ENCODE measurements at regions of chr5 and their contacts with region 1.

Region 1: GRCh38 chr5:163564321-163564938 is 59.0 kb downstream of the MAT2B start:
- DNase-seq: peak; percentile 48
- ATAC-seq: peak; percentile 59; the same call in 1 of the 2 replicates
- H3K4me3 ChIP-seq: no peak overlapping the region
- H3K27ac ChIP-seq: no peak overlapping the region
- H3K4me1 ChIP-seq: no peaks in the 10 kb centered on the region
- H3K27me3 ChIP-seq: peaks cover 40% of the 10 kb centered on the region; the same call in 1 of the 2 replicates
- CTCF ChIP-seq: peak; percentile 48 to 83 (median 77); a peak in 5 of 6 replicates
- POLR2A ChIP-seq: no peak
- RAD21 ChIP-seq: peak; percentile 83

Region 2: DNA sequence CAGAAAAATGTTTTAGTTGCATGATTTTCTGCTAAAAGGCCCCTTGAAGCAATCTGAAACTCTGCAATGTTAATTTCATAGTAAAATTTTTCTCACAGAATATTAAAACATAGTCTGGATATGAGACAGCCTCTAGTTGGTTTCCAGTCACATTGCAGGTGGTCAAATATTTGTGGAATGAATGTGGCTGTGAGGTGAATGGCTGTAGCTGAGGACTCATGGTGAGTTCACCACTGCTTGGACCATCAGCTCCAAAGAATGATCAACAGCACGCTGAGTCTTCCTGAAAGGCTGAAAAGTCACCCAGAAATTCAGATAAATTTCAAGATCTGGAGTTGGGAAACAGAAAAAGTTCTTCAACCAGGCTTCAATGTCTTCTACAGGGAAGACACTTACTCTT is 20.8 kb after region 1 on chr5:
- CTCF ChIA-PET with region 1: no interaction called
- POLR2A ChIA-PET with region 1: no interaction called
- RAD21 ChIA-PET with region 1: no interaction called
- intact Hi-C with region 1: no loop called
- DNase-seq: no peak
- ATAC-seq: no peak
- H3K4me3 ChIP-seq: no peak overlapping the region
- H3K27ac ChIP-seq: no peak overlapping the region
- H3K4me1 ChIP-seq: no peaks in the 10 kb centered on the region
- H3K27me3 ChIP-seq: peaks cover 10% of the 10 kb centered on the region; the same call in 1 of the 2 replicates
- CTCF ChIP-seq: no peak
- POLR2A ChIP-seq: no peak
- RAD21 ChIP-seq: no peak

Region 3: DNA sequence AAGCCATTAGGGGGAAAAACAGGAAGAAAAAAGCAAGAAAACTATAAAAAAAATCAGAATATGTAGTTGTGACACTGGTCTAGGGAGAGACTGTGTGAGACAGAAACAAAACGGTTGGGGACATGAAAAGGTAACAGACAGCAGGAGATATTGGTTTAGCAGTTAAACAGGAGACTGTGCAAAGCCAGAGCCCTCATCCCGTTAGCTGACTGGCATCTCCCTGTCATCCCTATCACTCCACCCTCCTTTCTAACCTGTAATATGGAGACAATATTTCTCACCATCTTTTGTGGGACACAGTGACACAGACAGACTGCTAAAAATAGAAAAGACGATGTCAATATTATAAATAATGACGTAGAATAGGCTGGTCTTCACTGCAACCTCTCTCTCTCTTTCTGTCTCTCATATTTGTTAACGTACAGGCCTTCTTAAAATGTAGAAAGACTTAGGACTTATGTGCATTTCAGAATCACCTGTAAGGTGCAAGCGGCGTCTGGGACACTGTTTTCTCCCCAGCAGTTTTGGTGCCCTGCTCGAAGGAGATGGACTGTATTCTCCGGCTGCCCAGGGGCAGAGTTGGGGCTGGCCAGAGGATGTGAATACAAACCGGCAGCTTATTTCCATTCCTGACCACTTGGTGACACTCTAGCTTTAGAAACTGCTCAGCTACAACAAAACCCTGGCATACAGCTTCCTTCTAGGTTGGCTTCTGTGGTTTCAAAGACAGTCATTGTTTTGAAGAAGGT is 131.6 kb after region 1 on chr5:
- CTCF ChIA-PET with region 1: no interaction called
- POLR2A ChIA-PET with region 1: no interaction called
- RAD21 ChIA-PET with region 1: no interaction called
- intact Hi-C with region 1: loop called (anchors 10 kb)
- DNase-seq: peak; percentile 19
- ATAC-seq: peak; percentile 93
- H3K4me3 ChIP-seq: no peak overlapping the region
- H3K27ac ChIP-seq: no peak overlapping the region
- H3K4me1 ChIP-seq: no peaks in the 10 kb centered on the region
- H3K27me3 ChIP-seq: peaks cover 7% of the 10 kb centered on the region; the same call in 1 of the 2 replicates
- CTCF ChIP-seq: peak; percentile 23 to 66 (median 47); a peak in 5 of 6 replicates
- POLR2A ChIP-seq: no peak
- RAD21 ChIP-seq: peak; percentile 53

Region 4: DNA sequence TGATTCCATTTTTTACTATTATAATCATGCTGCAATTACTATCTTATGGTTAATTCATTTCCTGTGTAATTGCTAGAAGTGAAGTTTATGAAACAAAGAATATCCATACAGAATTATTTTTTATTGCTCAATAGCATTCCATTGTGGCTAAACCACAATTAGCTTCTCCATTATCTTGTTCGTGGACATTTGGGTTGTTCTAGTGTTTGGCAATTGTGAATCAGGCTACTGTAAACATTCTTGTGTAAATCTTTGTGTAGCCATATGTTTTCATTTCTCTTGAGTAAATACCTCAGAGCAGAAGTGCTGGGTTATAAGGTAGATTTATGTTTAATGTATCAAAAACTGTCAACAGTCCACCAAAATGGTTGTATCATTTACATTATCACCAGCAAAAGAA is 282.1 kb after region 1 on chr5:
- CTCF ChIA-PET with region 1: no interaction called
- POLR2A ChIA-PET with region 1: no interaction called
- RAD21 ChIA-PET with region 1: no interaction called
- intact Hi-C with region 1: no loop called
- DNase-seq: no peak
- ATAC-seq: no peak
- H3K4me3 ChIP-seq: no peak overlapping the region
- H3K27ac ChIP-seq: no peak overlapping the region
- H3K4me1 ChIP-seq: no peaks in the 10 kb centered on the region
- H3K27me3 ChIP-seq: no peaks in the 10 kb centered on the region
- CTCF ChIP-seq: no peak
- POLR2A ChIP-seq: no peak
- RAD21 ChIP-seq: no peak

Region 5: GRCh38 chr5:165209086-165209727 is 1644.8 kb after region 1 on chr5:
- CTCF ChIA-PET with region 1: no interaction called
- POLR2A ChIA-PET with region 1: no interaction called
- RAD21 ChIA-PET with region 1: no interaction called
- intact Hi-C with region 1: loop called (anchors 5 kb)
- DNase-seq: no peak
- ATAC-seq: no peak
- H3K4me3 ChIP-seq: no peak overlapping the region
- H3K27ac ChIP-seq: no peak overlapping the region
- H3K4me1 ChIP-seq: no peaks in the 10 kb centered on the region
- H3K27me3 ChIP-seq: no peaks in the 10 kb centered on the region
- CTCF ChIP-seq: peak in 2 of 3 experiments; percentile 49 to 61; a peak in 4 of 6 replicates
- POLR2A ChIP-seq: no peak
- RAD21 ChIP-seq: peak; percentile 26; the same call in 1 of the 2 replicates

Measured in HCT116 (cell line).